PC-9 (cell line): ENCODE measurements at regions of chr7 and their contacts with region 1.

Region 1: DNA sequence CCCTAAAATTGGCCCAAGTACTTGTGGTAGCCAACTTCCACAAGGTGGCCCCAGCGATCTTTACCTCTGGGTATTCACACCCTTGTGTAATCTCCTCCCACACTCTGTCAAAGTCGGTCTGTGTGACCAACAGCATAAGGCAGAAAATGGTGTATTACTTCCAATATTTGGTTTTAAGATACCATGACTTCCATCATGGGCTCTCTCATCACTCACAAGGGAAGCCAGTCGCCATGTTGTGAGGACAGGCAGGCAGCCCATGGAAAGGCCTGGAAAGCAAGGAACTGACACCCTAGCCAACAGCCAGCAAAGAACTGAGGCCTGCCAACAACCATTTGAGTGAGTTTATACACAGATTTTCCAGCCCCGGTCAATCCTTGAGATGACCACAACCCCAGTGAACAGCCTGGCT is 91.0 kb upstream of the KMT2E start:
- DNase-seq: peak; percentile 65 to 76
- H3K4me3 ChIP-seq: no peak overlapping the region
- H3K27ac ChIP-seq: no peak overlapping the region
- H3K4me1 ChIP-seq: no peaks in the 10 kb centered on the region
- H3K27me3 ChIP-seq: no peaks in the 10 kb centered on the region
- CTCF ChIP-seq: peak; percentile 73

Region 2: GRCh38 chr7:104627516-104627915 is 295.5 kb before region 1 on chr7:
- CTCF ChIA-PET with region 1: no interaction called
- POLR2A ChIA-PET with region 1: no interaction called
- intact Hi-C with region 1: no loop called
- DNase-seq: peak in 1 of 2 experiments; percentile 3
- H3K4me3 ChIP-seq: no peak overlapping the region
- H3K27ac ChIP-seq: no peak overlapping the region
- H3K4me1 ChIP-seq: no peaks in the 10 kb centered on the region
- H3K27me3 ChIP-seq: no peaks in the 10 kb centered on the region
- CTCF ChIP-seq: no peak

Region 3: DNA sequence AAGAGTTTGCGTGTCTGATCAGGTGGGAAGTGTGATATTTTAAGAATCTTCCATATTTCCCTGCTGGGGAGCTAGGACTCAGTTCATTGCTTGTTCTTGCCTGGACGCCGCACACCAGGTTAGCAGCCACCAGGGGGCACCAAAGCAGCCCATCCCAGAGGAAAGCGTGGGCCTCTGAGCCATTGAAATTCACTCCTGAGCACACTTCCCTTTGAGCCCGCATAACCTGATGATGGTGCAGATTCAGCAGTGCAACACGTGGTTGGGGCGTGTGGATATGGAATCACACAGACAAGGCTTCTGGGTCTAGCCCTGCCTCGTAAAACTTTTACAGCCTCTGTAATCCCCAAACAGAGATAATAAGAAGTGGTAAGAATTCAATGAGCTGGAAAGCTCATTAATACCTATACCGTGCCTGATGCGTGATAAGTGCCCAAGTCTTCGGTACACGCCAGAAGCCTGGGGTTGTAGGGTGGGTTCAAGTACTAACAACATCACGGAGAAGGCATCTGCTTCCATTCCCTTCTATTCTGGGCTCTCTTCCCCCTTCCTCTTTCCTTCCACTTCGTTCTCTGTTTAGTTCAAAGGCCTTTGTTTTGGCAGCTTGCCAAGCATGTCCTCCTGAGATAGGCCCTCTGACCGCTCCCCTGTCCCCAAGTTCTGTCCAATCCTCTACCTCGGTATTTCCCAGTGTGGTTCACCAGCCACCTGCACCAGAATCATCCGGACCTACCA is 39.1 kb before region 1 on chr7:
- CTCF ChIA-PET with region 1: interaction called, 5 read pairs
- POLR2A ChIA-PET with region 1: no interaction called
- intact Hi-C with region 1: loop called (anchors 1 kb)
- DNase-seq: peak; percentile 42 to 77
- H3K4me3 ChIP-seq: no peak overlapping the region
- H3K27ac ChIP-seq: no peak overlapping the region
- H3K4me1 ChIP-seq: no peaks in the 10 kb centered on the region
- H3K27me3 ChIP-seq: peaks cover 16% of the 10 kb centered on the region; the same call in 1 of the 2 replicates
- CTCF ChIP-seq: peak; percentile 79

Region 4: GRCh38 chr7:104993217-104993862 is 70.3 kb after region 1 on chr7:
- CTCF ChIA-PET with region 1: no interaction called
- POLR2A ChIA-PET with region 1: interaction called, 12 read pairs
- intact Hi-C with region 1: no loop called
- DNase-seq: no peak
- H3K4me3 ChIP-seq: no peak overlapping the region
- H3K27ac ChIP-seq: no peak overlapping the region
- H3K4me1 ChIP-seq: no peaks in the 10 kb centered on the region
- H3K27me3 ChIP-seq: no peaks in the 10 kb centered on the region
- CTCF ChIP-seq: no peak

Region 5: DNA sequence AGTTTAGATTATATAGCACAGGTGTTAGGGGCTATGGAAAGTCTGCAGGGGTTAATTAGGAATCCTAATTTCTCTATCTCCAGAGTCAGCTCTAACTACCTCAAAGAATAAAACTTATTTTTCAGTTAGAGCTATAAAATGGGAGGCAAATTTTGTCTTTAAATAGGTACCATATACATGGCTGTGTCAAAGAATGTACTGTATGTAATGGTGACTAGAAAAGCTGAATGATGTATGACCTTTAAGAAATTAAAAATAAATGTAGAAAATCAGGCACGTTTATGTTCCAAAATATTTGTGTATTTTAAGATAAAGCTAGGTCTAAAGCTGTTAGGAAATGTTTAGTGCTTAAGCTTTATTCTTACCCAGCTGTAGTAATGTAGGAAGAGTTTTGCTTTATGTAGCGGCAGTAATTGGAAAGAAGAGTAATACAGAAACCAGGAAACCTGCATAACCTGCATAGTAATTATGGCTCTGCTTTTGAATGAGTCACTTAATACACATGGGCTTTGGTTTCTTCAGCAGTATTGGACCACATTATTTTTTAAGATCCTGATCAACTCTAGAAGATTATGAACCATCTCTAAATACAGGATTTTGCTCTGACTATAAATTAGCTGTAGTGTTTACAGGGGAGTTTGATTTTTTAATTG is 176.0 kb after region 1 on chr7:
- CTCF ChIA-PET with region 1: no interaction called
- POLR2A ChIA-PET with region 1: no interaction called
- intact Hi-C with region 1: loop called (anchors 2 kb)
- DNase-seq: peak in 1 of 2 experiments; percentile 75
- H3K4me3 ChIP-seq: no peak overlapping the region
- H3K27ac ChIP-seq: peak overlapping the region; percentile 60
- H3K4me1 ChIP-seq: peaks cover 7% of the 10 kb centered on the region; the same call in 1 of the 2 replicates
- H3K27me3 ChIP-seq: no peaks in the 10 kb centered on the region
- CTCF ChIP-seq: no peak

Region 6: GRCh38 chr7:105439174-105439893 is 516.3 kb after region 1 on chr7:
- CTCF ChIA-PET with region 1: no interaction called
- POLR2A ChIA-PET with region 1: no interaction called
- intact Hi-C with region 1: loop called (anchors 1 kb)
- DNase-seq: peak; percentile 71 to 94
- H3K4me3 ChIP-seq: peak overlapping the region; percentile 12; the same call in 1 of the 2 replicates
- H3K27ac ChIP-seq: peak overlapping the region; percentile 82
- H3K4me1 ChIP-seq: peaks cover 22% of the 10 kb centered on the region
- H3K27me3 ChIP-seq: no peaks in the 10 kb centered on the region
- CTCF ChIP-seq: 0 out of 2 replicates have a peak, but pooled peaks have one; percentile 21

Region 7: DNA sequence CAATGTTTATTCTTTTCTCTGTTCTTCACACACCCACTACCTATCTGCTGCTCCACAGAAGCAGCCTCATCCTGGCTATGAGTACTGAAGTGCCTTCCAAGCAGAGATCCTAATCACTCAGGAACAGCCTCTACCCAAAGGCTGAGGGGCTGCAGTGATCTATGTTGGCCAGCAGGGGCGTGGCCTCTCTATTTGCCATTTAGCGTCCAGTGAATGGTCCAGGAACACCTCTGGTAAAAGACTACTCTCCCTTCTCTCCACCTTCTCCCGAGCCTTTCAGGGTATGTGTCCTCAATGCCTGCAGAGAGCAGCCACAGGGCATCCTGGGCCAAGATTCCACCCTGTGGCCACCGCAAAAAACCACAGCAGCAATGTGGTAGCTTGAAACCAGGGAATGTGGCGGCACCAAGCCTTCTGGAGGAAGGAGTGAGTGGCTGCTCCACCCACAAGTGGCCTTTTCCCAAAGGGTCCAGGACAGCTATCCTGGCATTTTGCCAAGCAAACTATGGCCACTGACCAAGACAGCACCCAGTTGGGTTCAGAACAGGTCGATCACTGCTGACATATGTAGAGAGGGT is 1118.2 kb after region 1 on chr7:
- CTCF ChIA-PET with region 1: no interaction called
- POLR2A ChIA-PET with region 1: no interaction called
- intact Hi-C with region 1: loop called (anchors 2 kb)
- DNase-seq: peak; percentile 39 to 48
- H3K4me3 ChIP-seq: no peak overlapping the region
- H3K27ac ChIP-seq: no peak overlapping the region
- H3K4me1 ChIP-seq: peaks cover 6% of the 10 kb centered on the region; the same call in 1 of the 2 replicates
- H3K27me3 ChIP-seq: 0 out of 2 replicates have a peak, but pooled peaks cover 7% of the 10 kb centered on the region
- CTCF ChIP-seq: peak; percentile 80